Ascending aorta (tissue), 2 donors: ENCODE measurements at regions of chr5 and their contacts with region 1.

Region 1: GRCh38 chr5:123511648-123512605 is at the start of gene CSNK1G3:
- DNase-seq: peak; percentile 94 to 98
- H3K4me3 ChIP-seq: peak within 1 kb of the TSS; percentile 87 to 92
- H3K27ac ChIP-seq: peak within 1 kb of the TSS; percentile 90 to 97
- H3K4me1 ChIP-seq: peaks cover 0 to 10% of the 10 kb centered on the region in 2 donors
- H3K27me3 ChIP-seq: no peaks in the 10 kb centered on the region
- CTCF ChIP-seq: no peak
- total RNA-seq, gene CSNK1G3: 28.5 TPM

Region 2: DNA sequence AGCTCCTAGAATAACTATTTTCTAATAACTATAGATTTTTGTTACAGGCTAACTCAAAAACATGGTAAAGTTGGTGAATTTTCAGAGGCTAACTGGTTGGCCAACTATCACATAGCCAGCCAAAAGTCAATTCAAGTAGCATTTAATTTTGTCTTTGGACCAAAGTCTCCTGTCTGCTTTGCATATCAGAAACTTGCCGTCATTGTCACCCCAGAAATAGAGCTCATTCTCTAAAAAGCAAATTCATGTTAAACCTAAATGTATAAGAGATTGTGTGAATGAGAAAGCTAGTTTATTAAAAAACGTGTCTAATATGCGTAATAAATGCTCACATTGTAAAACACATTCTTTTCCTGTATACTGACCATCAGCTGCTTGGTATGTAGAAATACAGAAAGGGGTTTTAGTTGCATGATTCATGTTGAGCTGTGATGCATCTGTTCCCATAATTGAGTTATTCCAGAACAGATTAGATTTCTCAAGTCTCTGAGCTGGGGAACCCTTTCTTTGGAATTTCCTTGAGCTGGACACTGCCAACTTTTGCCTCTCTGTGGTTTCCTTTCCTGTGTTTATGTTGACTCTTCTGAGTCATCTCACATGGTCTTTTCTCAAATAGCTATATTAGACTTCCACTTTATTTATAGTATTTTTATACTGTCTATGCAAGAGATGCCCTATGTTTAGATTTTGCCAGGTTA is 1542.9 kb before region 1 on chr5:
- intact Hi-C with region 1: loop called (anchors 10 kb)
- DNase-seq: peak in 1 of 2 donors; percentile 62
- H3K4me3 ChIP-seq: no peak overlapping the region
- H3K27ac ChIP-seq: peak overlapping the region; percentile 49
- H3K4me1 ChIP-seq: peaks cover 0 to 16% of the 10 kb centered on the region in 2 donors
- H3K27me3 ChIP-seq: no peaks in the 10 kb centered on the region
- CTCF ChIP-seq: no peak

Region 3: GRCh38 chr5:122774861-122775549 is 736.9 kb before region 1 on chr5 and contains the start of gene SNX2:
- intact Hi-C with region 1: loop called (anchors 10 kb)
- DNase-seq: peak; percentile 71 to 97
- H3K4me3 ChIP-seq: peak within 1 kb of the TSS; percentile 77 to 99
- H3K27ac ChIP-seq: peak within 1 kb of the TSS; percentile 79 to 94
- H3K4me1 ChIP-seq: peaks cover 0 to 15% of the 10 kb centered on the region in 2 donors
- H3K27me3 ChIP-seq: no peaks in the 10 kb centered on the region
- CTCF ChIP-seq: no peak
- total RNA-seq, gene SNX2: 15.6 TPM

Region 4: GRCh38 chr5:123423278-123424149 is 88.4 kb before region 1 on chr5 and contains the start of gene CEP120:
- intact Hi-C with region 1: loop called (anchors 1 kb)
- DNase-seq: peak; percentile 93 to 99
- H3K4me3 ChIP-seq: peak within 1 kb of the TSS; percentile 73 to 86
- H3K27ac ChIP-seq: peak within 1 kb of the TSS; percentile 83 to 87
- H3K4me1 ChIP-seq: peaks cover 0 to 8% of the 10 kb centered on the region in 2 donors
- H3K27me3 ChIP-seq: no peaks in the 10 kb centered on the region
- CTCF ChIP-seq: peak; percentile 68 to 87 (median 81)
- total RNA-seq, gene CEP120: 11.6 TPM

Region 5: DNA sequence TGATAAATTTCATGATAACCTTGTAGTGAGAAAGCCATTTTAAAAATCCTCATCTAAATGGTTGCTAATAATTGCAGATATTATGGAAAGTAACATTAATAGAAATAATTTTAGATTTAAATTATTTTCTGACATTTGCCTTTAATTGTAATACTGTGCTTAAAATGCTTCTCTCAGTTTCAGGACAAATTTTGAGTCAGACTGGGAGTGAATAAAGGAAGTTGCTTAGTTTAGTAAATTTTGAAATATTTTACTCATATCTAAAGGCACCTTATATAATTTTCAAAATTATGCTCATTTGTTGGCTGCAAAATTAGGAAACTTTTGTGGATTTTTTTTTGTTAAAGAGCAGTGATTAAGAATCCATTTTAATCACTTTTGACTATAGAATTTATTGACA is 93.9 kb after region 1 on chr5:
- intact Hi-C with region 1: loop called (anchors 5 kb)
- DNase-seq: no peak
- H3K4me3 ChIP-seq: no peak overlapping the region
- H3K27ac ChIP-seq: no peak overlapping the region
- H3K4me1 ChIP-seq: no peaks in the 10 kb centered on the region
- H3K27me3 ChIP-seq: no peaks in the 10 kb centered on the region
- CTCF ChIP-seq: no peak